Right ventricle myocardium inferior (tissue), 1 donor: ENCODE measurements at regions of chr11 and their contacts with region 1.

Region 1: GRCh38 chr11:11463405-11463804 is 110.4 kb upstream of the CSNK2A3 start:
- DNase-seq: no peak
- ATAC-seq: no peak

Region 2: GRCh38 chr11:11081776-11082175 is 381.6 kb before region 1 on chr11:
- intact Hi-C with region 1: no loop called
- DNase-seq: no peak
- ATAC-seq: no peak

Region 3: DNA sequence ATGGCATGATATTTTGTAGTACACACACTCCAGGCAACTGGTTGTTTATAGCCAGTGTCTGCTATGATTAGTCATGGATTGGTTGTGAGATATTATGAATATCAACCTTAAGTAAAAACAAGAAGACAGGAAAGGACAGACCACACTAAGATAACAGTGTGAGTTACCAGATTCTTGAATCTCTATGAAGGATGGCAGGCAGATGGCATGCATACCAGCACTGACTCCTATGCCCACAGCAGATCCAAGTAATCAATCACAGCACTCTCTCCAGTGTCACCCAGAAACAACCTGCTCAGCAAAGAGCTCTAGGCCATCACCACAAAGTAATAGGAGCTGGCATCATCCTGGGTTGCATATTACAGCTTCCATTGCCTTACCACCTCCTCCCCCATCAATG is 41.8 kb after region 1 on chr11:
- intact Hi-C with region 1: loop called (anchors 5 kb)
- DNase-seq: no peak
- ATAC-seq: no peak